Adrenal gland (tissue), 19 donors: ENCODE measurements at regions of chr9 and their contacts with region 1.

Region 1: GRCh38 chr9:32579706-32580331 is 6.9 kb upstream of the NDUFB6 start:
- DNase-seq: peak; percentile 56 to 91 (median 74)
- H3K4me3 ChIP-seq: no peak overlapping the region
- H3K27ac ChIP-seq: no peak overlapping the region
- H3K4me1 ChIP-seq: no peaks in the 10 kb centered on the region
- H3K27me3 ChIP-seq: no peaks in the 10 kb centered on the region
- CTCF ChIP-seq: peak; percentile 80 to 94 (median 88)
- POLR2A ChIP-seq: no peak

Region 2: DNA sequence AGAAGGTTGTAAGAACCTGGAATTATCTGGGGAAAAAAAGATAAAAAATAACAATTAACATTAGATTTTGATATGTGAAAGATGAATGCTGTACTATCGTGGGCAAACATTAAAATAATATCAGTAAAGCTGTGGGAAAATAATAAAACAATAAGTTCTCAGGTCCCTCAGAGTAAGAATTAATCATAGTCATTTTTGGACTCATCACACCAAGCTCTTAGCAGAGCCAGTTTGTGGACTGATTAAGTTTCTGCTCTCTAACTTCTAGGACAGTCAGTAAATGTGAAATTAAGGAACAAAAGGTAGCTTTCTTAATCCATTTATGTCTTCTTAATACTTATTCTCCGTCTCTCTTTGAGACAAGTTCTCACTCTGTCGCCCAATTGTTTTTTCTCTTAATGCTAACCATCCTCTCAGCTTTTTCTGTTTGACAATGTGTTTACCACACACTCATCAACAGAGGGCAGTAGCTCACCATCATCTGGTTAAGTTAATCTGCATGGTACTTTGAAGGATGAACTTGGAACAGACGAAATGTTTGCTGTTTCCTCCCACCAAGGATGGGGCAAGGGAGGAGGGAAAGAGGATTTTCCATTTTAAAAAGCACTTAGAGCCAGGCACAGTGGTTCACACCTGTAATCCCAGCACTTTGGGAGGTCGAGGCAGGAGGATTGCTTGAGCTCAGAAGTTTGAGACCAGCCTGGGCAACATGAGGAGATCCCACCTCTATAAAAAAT is 200.7 kb before region 1 on chr9:
- intact Hi-C with region 1: loop called (anchors 2 to 5 kb)
- DNase-seq: peak in 6 of 7 donors; percentile 55 to 72 (median 58)
- H3K4me3 ChIP-seq: no peak overlapping the region
- H3K27ac ChIP-seq: no peak overlapping the region
- H3K4me1 ChIP-seq: peaks cover 4 to 12% of the 10 kb centered on the region in 2 donors
- H3K27me3 ChIP-seq: no peaks in the 10 kb centered on the region
- CTCF ChIP-seq: peak; percentile 55 to 96 (median 84)
- POLR2A ChIP-seq: no peak

Region 3: DNA sequence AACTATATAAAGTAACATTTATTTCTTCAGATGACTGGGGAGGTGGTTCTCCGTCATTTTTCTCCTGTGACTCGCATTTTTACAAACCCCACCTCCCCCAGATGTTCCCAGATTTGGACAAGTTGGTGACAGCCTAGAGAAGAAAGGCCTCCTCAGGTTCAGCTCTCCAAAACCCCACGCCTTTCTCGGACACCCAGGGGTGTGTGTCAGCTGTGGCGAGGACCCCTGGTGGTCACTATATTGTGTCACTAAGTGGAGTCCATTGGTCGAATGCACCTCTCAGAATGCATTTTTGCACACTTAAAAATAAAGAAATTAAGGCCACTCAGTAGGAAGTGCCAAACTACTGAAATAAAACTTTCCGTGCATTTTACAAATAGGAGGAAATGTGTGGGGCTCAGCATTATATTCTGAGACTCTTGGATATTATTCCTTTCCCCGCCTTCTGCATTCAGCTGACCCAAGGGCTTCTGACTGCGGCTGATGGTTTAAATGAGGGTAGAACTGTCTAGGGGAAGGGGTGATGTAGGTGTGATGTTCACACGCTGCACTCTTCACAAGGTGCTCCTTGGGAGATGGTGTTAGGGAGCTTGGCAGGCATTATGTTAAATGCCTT is 147.8 kb before region 1 on chr9:
- intact Hi-C with region 1: loop called in 1 of 2 experiments (anchors 5 kb)
- DNase-seq: peak; percentile 43 to 72 (median 57)
- H3K4me3 ChIP-seq: no peak overlapping the region
- H3K27ac ChIP-seq: peak overlapping the region in 1 of 5 donors; percentile 4
- H3K4me1 ChIP-seq: peaks cover 0 to 8% of the 10 kb centered on the region in 2 donors
- H3K27me3 ChIP-seq: no peaks in the 10 kb centered on the region
- CTCF ChIP-seq: peak; percentile 35 to 62 (median 56)
- POLR2A ChIP-seq: no peak

Region 4: GRCh38 chr9:32968101-32969011 is 388.5 kb after region 1 on chr9:
- intact Hi-C with region 1: loop called (anchors 5 kb)
- DNase-seq: peak in 6 of 7 donors; percentile 44 to 86 (median 68)
- H3K4me3 ChIP-seq: no peak overlapping the region
- H3K27ac ChIP-seq: no peak overlapping the region
- H3K4me1 ChIP-seq: no peaks in the 10 kb centered on the region
- H3K27me3 ChIP-seq: no peaks in the 10 kb centered on the region
- CTCF ChIP-seq: peak; percentile 63 to 84 (median 69)
- POLR2A ChIP-seq: no peak